PC-9 (cell line): ENCODE measurements at regions of chr9 and their contacts with region 1.

Region 1: GRCh38 chr9:91193658-91194391 is 167.9 kb downstream of the AUH start:
- DNase-seq: peak; percentile 85 to 86
- H3K4me3 ChIP-seq: peak overlapping the region; percentile 66
- H3K27ac ChIP-seq: peak overlapping the region; percentile 99
- H3K4me1 ChIP-seq: peaks cover 63% of the 10 kb centered on the region
- H3K27me3 ChIP-seq: no peaks in the 10 kb centered on the region
- CTCF ChIP-seq: no peak; the same call in 1 of the 2 replicates

Region 2: DNA sequence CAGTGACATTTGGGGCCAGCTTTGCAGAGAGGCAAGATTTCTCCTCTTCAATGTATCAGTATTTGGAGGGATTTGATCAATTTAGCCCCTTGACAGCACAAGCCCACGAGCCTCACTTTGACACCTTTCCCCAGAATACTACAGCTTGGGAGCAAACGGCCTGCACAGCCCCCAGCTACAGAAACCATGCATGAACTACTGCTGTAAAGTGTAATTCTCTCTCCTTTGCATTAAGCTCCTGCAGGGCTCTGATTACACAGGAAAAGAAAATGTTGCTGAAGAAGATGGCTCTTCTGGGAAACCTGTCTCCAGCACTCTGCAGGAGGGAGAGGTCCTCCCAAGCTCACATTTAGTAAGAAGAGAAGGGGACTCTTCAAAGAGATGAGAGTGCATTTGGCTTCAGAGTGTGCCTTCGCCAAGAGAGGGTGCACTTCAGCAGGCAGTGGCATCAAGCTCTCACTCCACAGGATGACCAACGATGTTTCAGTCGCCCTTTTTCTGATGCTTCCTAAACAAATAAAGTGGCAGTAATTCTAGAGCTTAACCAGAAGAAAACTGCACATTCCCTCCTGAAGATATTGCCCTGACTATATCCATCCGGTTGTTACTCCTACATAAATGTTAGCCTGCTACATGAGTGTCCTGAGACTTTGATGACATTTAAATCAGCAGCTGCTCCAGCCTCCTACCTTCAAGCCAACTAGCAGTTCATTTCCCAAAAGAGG is 104.3 kb before region 1 on chr9:
- CTCF ChIA-PET with region 1: no interaction called
- POLR2A ChIA-PET with region 1: no interaction called
- intact Hi-C with region 1: loop called (anchors 10 kb)
- DNase-seq: peak in 1 of 2 experiments; percentile 21
- H3K4me3 ChIP-seq: no peak overlapping the region
- H3K27ac ChIP-seq: no peak overlapping the region
- H3K4me1 ChIP-seq: no peaks in the 10 kb centered on the region
- H3K27me3 ChIP-seq: no peaks in the 10 kb centered on the region
- CTCF ChIP-seq: peak; percentile 47

Region 3: DNA sequence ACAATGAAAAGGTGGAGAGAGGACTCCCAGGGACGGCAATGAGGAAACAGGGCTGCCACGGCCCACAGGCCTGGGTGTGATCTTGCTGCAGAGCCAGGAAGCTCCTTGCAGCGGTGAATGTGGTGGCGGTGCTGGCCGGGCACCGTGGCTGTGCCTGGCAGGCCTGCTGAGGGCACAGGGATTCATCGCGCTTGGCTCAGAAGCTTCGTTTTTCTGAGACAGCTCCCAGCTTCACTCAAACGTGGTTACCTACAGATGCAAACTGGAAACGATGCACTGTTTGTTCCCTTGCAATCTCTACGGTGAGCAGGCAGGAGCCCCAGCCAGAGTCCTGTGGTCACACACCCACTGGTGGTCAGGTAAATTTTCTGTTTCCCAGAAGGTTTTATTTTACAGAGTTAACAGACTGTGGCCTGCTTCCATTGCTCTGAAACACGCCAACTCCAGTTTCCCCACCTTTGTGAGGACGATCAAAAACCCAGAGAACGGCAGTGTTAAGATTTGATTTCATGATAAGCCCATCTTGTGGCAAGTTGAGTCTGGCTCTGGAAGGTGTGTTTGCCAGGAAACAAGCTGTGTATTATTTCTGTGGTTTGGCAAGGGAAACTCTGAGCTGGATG is 16.1 kb before region 1 on chr9:
- CTCF ChIA-PET with region 1: no interaction called
- POLR2A ChIA-PET with region 1: interaction called, 23 read pairs
- intact Hi-C with region 1: no loop called
- DNase-seq: no peak
- H3K4me3 ChIP-seq: no peak overlapping the region
- H3K27ac ChIP-seq: no peak overlapping the region
- H3K4me1 ChIP-seq: peaks cover 19% of the 10 kb centered on the region
- H3K27me3 ChIP-seq: no peaks in the 10 kb centered on the region
- CTCF ChIP-seq: no peak

Region 4: GRCh38 chr9:91231619-91232018 is 37.8 kb after region 1 on chr9:
- CTCF ChIA-PET with region 1: no interaction called
- POLR2A ChIA-PET with region 1: no interaction called
- intact Hi-C with region 1: no loop called
- DNase-seq: no peak
- H3K4me3 ChIP-seq: no peak overlapping the region
- H3K27ac ChIP-seq: no peak overlapping the region
- H3K4me1 ChIP-seq: no peaks in the 10 kb centered on the region
- H3K27me3 ChIP-seq: no peaks in the 10 kb centered on the region
- CTCF ChIP-seq: no peak

Region 5: GRCh38 chr9:91253488-91253887 is 59.7 kb after region 1 on chr9:
- CTCF ChIA-PET with region 1: no interaction called
- POLR2A ChIA-PET with region 1: no interaction called
- intact Hi-C with region 1: no loop called
- DNase-seq: no peak
- H3K4me3 ChIP-seq: no peak overlapping the region
- H3K27ac ChIP-seq: no peak overlapping the region
- H3K4me1 ChIP-seq: no peaks in the 10 kb centered on the region
- H3K27me3 ChIP-seq: no peaks in the 10 kb centered on the region
- CTCF ChIP-seq: 0 out of 2 replicates have a peak, but pooled peaks have one; percentile 14

Region 6: DNA sequence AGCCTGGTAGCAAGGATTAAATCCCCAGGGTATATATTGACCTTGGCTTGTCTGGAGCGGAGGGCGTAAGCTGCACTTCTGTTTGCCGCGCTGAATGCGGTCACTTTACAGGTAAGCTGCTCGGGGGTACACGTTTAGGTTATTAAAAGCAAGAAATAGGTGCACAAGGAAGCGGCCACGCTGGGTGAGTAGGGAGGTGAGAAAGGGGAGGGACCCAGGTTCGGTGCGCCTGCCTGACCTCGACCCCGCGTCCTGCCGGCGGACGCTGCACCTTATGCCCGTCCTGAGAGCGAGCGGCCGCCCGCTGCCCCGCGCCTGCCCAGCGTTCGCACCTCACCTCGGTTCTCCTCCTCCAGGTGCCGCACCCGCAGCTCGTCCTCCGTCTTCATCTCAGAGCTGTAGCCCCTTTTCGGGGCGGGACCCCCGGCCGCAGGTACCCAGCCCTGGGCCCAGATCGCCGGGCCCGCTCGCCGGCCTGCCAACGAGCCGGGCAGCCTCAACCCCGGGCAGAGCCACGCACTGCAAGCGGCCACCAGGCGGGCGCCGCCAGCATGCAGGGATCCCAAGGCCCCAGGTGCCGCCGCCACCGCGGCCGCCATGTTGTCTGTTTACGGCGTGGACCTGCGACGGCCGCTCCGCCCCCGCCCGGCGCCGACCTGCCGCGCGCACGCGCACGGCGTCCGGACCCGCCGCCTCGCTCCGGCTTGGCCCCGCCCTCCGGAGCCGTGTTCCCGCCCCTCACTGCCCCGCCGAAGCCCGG is 167.6 kb after region 1 on chr9 and contains the start of gene AUH:
- CTCF ChIA-PET with region 1: no interaction called
- POLR2A ChIA-PET with region 1: no interaction called
- intact Hi-C with region 1: loop called (anchors 2 kb)
- DNase-seq: peak; percentile 60 to 92
- H3K4me3 ChIP-seq: peak within 1 kb of the TSS; percentile 95
- H3K27ac ChIP-seq: peak within 1 kb of the TSS; percentile 56
- H3K4me1 ChIP-seq: peaks cover 23% of the 10 kb centered on the region
- H3K27me3 ChIP-seq: no peaks in the 10 kb centered on the region
- CTCF ChIP-seq: no peak
- total RNA-seq, gene AUH: 24.9 and 31.1 TPM in 2 replicates

Region 7: DNA sequence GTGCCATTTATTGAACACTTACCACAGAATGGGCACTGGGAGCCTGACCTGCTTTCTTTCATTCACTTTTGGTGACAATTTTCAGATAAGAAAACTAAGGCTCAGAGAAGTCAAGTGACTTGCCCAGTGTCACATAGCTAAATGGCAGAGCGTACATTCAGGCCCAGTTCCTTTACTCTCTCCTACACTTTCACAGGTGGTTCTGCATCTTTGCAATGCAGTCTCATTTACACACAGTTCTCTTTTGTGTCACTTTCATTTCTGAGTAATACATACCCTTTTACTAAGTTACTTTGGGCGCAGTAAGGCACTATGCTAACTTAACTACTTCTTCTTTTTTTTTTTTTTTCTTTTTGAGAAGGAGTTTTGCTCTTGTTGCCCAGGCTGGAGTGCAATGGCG is 221.5 kb after region 1 on chr9:
- CTCF ChIA-PET with region 1: no interaction called
- POLR2A ChIA-PET with region 1: no interaction called
- intact Hi-C with region 1: no loop called
- DNase-seq: no peak
- H3K4me3 ChIP-seq: no peak overlapping the region
- H3K27ac ChIP-seq: no peak overlapping the region
- H3K4me1 ChIP-seq: peaks cover 55% of the 10 kb centered on the region
- H3K27me3 ChIP-seq: no peaks in the 10 kb centered on the region
- CTCF ChIP-seq: no peak